GM12878 (cell line): ENCODE measurements at regions of chr7 and their contacts with region 1.

Region 1: DNA sequence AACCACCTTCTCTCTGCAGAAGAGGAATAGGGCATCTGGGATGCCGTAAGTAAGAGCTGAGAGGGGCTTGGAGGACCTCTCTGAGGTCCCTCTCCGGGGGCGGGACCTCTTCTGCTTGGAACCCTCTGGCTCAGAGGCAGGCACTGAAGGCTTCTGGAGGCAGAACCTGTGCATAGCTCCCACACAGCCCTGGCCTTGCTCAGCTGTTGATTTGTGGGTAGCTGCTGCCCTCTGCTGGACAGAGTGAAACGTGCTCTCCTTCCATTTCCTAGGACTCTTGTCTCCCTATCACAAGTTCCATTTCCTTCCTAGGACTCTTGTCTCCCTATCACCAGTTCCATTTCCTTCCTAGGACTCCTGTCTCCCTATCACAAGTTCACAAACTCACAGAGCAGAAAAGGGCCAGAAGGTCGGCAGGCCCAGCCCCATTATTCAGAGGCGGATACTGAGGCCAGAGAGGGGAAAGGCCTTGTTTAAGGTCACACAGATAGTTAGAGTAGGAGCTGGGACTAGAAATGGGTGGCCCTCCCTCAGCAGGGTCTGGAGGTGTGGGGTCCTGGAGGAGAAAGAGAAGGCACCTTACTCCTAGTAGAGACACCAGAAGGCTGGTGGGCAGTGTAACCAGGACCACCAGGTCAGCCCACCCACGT is 30.3 kb upstream of the GARS1 start:
- DNase-seq: peak; percentile 30
- ATAC-seq: peak; percentile 100
- H3K4me3 ChIP-seq: no peak overlapping the region
- H3K27ac ChIP-seq: no peak overlapping the region
- H3K4me1 ChIP-seq: no peaks in the 10 kb centered on the region
- H3K27me3 ChIP-seq: no peaks in the 10 kb centered on the region
- CTCF ChIP-seq: peak; percentile 77 to 92 (median 79)
- EP300 ChIP-seq: no peak
- POLR2A ChIP-seq: no peak
- RAD21 ChIP-seq: peak; percentile 92

Region 2: DNA sequence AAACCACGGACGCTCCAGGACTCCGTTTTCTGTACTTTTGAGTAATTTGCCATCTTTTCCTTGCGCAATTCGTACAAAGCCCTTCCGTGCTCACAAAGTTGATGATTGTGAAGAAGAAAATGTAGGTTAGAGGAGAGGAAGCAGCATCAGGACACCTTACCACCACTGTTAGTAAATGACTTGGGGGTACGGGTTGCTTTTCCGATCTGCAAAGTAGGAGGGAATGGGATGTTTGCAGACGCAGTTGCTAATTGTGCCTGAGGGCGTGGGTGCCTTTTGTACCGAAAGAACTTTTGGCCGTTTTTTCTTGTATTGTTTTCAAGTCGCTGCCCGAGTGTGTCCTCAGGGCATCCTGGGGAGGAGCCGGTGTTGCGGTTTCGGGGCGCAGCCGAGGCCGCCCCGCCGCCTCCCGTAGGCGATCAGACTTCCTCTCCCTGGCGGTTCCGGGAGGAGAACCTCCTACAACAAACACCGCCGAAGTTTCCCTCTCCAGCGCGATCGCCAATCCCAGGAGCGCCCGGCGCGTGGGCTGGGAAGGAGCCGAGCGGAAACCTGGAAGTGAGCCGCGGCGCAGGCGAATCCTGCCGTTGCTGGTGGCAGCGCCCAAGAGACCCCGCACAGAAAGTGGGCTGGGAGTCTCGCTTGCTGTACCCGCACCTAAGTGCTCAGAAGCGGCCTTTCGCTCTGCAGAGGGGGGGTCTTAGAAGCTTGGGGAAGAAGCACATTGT is 999.7 kb before region 1 on chr7:
- CTCF ChIA-PET with region 1: no interaction called
- POLR2A ChIA-PET with region 1: no interaction called
- RAD21 ChIA-PET with region 1: no interaction called
- SMC1A ChIA-PET with region 1: no interaction called
- in situ Hi-C with region 1: no loop called
- intact Hi-C with region 1: no loop called
- DNase-seq: no peak
- ATAC-seq: no peak
- H3K4me3 ChIP-seq: no peak overlapping the region
- H3K27ac ChIP-seq: no peak overlapping the region
- H3K4me1 ChIP-seq: no peaks in the 10 kb centered on the region
- H3K27me3 ChIP-seq: peaks cover 12 to 27% of the 10 kb centered on the region in 2 experiments
- CTCF ChIP-seq: no peak
- EP300 ChIP-seq: no peak
- POLR2A ChIP-seq: no peak
- RAD21 ChIP-seq: no peak

Region 3: DNA sequence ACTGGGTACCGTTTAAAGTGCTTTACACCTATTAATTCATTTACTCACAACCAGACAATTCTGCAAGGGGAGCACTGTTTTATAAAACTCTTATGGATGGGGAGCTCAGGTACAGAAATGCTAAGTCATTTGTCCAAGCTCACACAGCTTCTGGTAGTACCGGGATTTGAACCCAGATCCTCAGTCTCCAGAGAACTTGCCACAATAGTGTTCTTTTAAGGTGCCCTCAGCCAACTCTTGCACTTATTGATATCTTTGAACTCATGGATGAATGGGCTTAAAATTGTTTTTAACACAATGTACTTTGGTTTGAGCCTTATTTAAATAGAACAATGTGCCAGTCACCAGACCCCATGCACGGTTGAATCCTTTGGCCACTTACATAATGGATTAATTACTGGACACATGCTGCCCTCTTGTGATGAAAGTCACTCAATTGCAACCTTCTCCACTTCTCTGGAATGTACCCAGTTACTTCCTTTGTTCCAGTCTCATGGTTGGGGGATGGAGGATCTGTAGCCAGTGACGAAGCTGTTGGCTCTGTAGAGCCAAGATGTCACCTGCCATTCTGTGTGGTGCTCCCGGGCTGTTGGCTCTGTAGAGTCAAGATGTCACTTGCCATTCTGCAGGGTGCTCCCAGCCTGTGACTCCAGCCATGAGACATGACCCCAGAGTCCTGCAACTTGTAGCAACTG is 151.4 kb before region 1 on chr7:
- CTCF ChIA-PET with region 1: no interaction called
- POLR2A ChIA-PET with region 1: no interaction called
- RAD21 ChIA-PET with region 1: no interaction called
- SMC1A ChIA-PET with region 1: no interaction called
- in situ Hi-C with region 1: no loop called
- intact Hi-C with region 1: loop called (anchors 5 kb)
- DNase-seq: peak; percentile 16
- ATAC-seq: peak; percentile 75
- H3K4me3 ChIP-seq: no peak overlapping the region
- H3K27ac ChIP-seq: no peak overlapping the region
- H3K4me1 ChIP-seq: peaks cover 8% of the 10 kb centered on the region
- H3K27me3 ChIP-seq: no peaks in the 10 kb centered on the region
- CTCF ChIP-seq: peak; percentile 38 to 59 (median 40); a peak in 5 of 6 replicates
- EP300 ChIP-seq: no peak
- POLR2A ChIP-seq: no peak
- RAD21 ChIP-seq: peak; percentile 70

Region 4: DNA sequence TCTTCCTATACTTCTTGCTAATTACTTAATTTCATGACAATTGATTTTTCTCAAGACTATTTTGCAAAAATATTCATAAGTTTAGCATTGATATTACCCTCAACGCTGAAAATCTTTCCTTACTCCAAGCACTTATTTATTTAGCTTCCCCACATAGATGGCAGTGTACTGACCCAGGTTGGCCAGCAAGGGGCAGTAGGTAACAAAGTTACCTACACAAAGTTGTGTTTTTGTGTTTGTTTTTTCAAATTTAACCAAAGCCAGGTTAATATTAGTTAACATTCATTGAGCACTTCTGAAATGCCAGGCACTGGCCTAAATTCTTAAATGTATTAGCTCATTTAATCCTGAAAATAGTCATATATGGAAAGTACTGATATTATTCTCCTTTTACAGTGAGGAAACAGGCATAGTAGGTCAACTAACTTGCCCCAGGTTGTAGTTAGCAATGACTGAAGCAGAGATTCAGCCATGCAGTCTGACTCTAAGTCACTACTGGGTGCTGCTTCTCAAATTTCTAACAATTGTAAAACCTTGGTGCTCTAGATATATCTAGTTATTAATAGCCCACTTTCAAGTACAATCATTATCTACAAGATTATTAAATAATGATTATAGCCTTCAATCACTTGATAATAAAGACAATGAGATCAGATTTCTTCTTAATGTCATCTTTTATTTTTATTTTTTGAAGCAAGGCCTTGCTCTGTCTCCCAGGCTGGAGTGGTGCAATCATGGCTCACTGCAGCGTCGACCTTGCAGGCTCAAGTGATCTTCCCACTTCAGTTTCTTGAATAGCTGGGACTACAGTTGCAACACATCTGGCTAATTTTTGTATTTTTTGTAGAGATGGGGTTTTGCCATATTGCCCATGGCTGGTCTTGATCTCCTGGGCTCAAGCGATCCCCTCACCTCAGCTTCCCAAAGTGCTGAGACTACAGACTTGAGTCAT is 54.0 kb before region 1 on chr7:
- CTCF ChIA-PET with region 1: interaction called, 108 read pairs
- POLR2A ChIA-PET with region 1: no interaction called
- RAD21 ChIA-PET with region 1: interaction called, 34 read pairs
- SMC1A ChIA-PET with region 1: interaction called, 81 read pairs
- in situ Hi-C with region 1: no loop called
- intact Hi-C with region 1: loop called (anchors 1 kb)
- DNase-seq: no peak
- ATAC-seq: peak; percentile 85
- H3K4me3 ChIP-seq: no peak overlapping the region
- H3K27ac ChIP-seq: no peak overlapping the region
- H3K4me1 ChIP-seq: no peaks in the 10 kb centered on the region
- H3K27me3 ChIP-seq: no peaks in the 10 kb centered on the region
- CTCF ChIP-seq: peak; percentile 67 to 85 (median 82)
- EP300 ChIP-seq: no peak
- POLR2A ChIP-seq: no peak
- RAD21 ChIP-seq: peak; percentile 75

Region 5: GRCh38 chr7:30515761-30516160 is 48.6 kb before region 1 on chr7:
- CTCF ChIA-PET with region 1: interaction called, 108 read pairs
- POLR2A ChIA-PET with region 1: no interaction called
- RAD21 ChIA-PET with region 1: interaction called, 34 read pairs
- SMC1A ChIA-PET with region 1: interaction called, 81 read pairs
- in situ Hi-C with region 1: no loop called
- intact Hi-C with region 1: loop called (anchors 1 kb)
- DNase-seq: no peak
- ATAC-seq: no peak
- H3K4me3 ChIP-seq: no peak overlapping the region
- H3K27ac ChIP-seq: no peak overlapping the region
- H3K4me1 ChIP-seq: peaks cover 2% of the 10 kb centered on the region; the same call in 1 of the 2 replicates
- H3K27me3 ChIP-seq: no peaks in the 10 kb centered on the region
- CTCF ChIP-seq: no peak
- EP300 ChIP-seq: no peak
- POLR2A ChIP-seq: no peak
- RAD21 ChIP-seq: no peak

Region 6: GRCh38 chr7:30531286-30531685 is 33.1 kb before region 1 on chr7:
- CTCF ChIA-PET with region 1: interaction called, 10 read pairs
- POLR2A ChIA-PET with region 1: no interaction called
- RAD21 ChIA-PET with region 1: no interaction called
- SMC1A ChIA-PET with region 1: interaction called, 3 read pairs
- in situ Hi-C with region 1: no loop called
- intact Hi-C with region 1: no loop called
- DNase-seq: no peak
- ATAC-seq: no peak
- H3K4me3 ChIP-seq: no peak overlapping the region
- H3K27ac ChIP-seq: no peak overlapping the region
- H3K4me1 ChIP-seq: no peaks in the 10 kb centered on the region
- H3K27me3 ChIP-seq: no peaks in the 10 kb centered on the region
- CTCF ChIP-seq: no peak
- EP300 ChIP-seq: no peak
- POLR2A ChIP-seq: no peak
- RAD21 ChIP-seq: no peak

Region 7: DNA sequence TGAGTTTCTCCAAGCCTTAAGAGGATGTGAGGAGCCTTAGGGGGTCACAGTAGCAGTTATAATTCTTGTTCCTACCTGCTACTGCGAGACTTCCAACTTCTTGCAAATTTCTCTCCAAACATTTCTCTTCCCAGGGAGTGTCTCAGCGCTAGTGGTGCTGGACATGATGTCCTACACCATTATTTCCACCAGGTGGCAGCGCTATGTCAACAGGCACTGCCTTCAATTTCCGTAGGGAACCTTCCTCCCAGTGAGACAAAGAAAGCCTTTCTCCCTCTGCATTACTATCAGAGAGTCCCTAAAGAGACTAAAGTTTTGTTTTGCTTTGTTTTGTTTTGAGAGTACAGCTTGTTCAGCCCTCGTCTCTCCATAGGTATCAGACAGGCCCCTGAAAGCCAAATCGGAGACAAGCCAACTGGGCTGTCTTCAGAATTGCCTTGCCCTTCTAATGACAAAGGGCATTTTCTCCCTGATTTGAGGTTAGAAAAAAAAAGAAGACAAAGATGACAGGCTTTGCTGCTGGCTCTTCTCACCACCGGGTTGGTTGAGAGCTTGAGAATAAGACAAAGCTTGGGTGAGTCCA is 15.5 kb before region 1 on chr7:
- CTCF ChIA-PET with region 1: interaction called, 119 read pairs
- POLR2A ChIA-PET with region 1: no interaction called
- RAD21 ChIA-PET with region 1: interaction called, 33 read pairs
- SMC1A ChIA-PET with region 1: interaction called, 15 read pairs
- in situ Hi-C with region 1: no loop called
- intact Hi-C with region 1: no loop called
- DNase-seq: no peak
- ATAC-seq: peak; percentile 82
- H3K4me3 ChIP-seq: no peak overlapping the region
- H3K27ac ChIP-seq: no peak overlapping the region
- H3K4me1 ChIP-seq: peaks cover 4% of the 10 kb centered on the region; the same call in 1 of the 2 replicates
- H3K27me3 ChIP-seq: no peaks in the 10 kb centered on the region
- CTCF ChIP-seq: peak; percentile 69 to 81 (median 76)
- EP300 ChIP-seq: no peak
- POLR2A ChIP-seq: no peak
- RAD21 ChIP-seq: peak; percentile 50

Region 8: GRCh38 chr7:30642789-30643188 is 78.4 kb after region 1 on chr7:
- CTCF ChIA-PET with region 1: no interaction called
- POLR2A ChIA-PET with region 1: no interaction called
- RAD21 ChIA-PET with region 1: no interaction called
- SMC1A ChIA-PET with region 1: no interaction called
- in situ Hi-C with region 1: no loop called
- intact Hi-C with region 1: no loop called
- DNase-seq: no peak
- ATAC-seq: no peak
- H3K4me3 ChIP-seq: no peak overlapping the region
- H3K27ac ChIP-seq: no peak overlapping the region
- H3K4me1 ChIP-seq: no peaks in the 10 kb centered on the region
- H3K27me3 ChIP-seq: no peaks in the 10 kb centered on the region
- CTCF ChIP-seq: no peak
- EP300 ChIP-seq: no peak
- POLR2A ChIP-seq: no peak
- RAD21 ChIP-seq: no peak

Region 9: DNA sequence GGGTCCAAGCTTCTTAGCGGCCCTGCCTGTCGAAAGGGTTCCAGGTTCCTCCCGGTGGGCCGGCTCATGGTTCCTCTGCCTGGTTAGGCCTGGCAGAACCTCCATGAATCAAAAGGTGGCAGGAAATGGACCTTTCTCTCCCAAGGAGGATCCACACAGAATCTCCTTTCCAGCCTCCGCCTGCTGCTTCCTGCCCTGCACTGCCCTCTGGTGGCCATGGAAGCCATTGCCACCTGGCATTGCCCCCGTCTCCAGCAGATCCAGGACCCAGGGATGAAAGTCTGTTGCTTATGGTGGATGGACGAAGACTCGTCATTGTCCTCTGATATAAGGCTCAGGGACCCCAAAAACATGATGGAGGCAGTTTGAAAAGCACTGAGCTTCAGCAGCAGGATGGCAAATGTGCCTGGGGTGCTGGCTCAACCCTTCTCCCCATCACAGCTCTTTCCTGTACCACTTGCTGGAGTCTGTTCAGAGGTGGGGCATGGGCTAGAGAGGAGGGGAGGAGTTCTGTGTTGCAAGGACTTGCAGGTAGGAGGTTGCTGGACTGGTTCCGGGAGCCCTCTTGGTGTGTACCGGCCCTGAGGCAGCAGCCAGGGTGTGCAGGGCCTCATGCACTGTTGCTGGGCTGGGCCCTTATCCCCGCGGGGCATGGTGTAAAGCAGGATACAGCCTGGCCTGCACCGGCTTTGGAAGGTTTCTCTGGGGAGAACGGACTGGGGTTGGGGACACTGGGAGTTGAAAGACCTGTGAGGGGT is 176.2 kb after region 1 on chr7:
- CTCF ChIA-PET with region 1: interaction called, 15 read pairs
- POLR2A ChIA-PET with region 1: no interaction called
- RAD21 ChIA-PET with region 1: interaction called, 3 read pairs
- SMC1A ChIA-PET with region 1: interaction called, 3 read pairs
- in situ Hi-C with region 1: no loop called
- intact Hi-C with region 1: no loop called
- DNase-seq: no peak
- ATAC-seq: peak; percentile 90
- H3K4me3 ChIP-seq: no peak overlapping the region
- H3K27ac ChIP-seq: no peak overlapping the region
- H3K4me1 ChIP-seq: no peaks in the 10 kb centered on the region
- H3K27me3 ChIP-seq: no peaks in the 10 kb centered on the region; a peak in 2 of 4 replicates
- CTCF ChIP-seq: peak; percentile 96 to 99 (median 98); a peak in 5 of 6 replicates
- EP300 ChIP-seq: no peak
- POLR2A ChIP-seq: no peak
- RAD21 ChIP-seq: peak; percentile 94